ENCODE measurements at regions of chr20 and their contacts with region 1.

Region 1: GRCh38 chr20:33515569-33516216 is 25.8 kb downstream of the CBFA2T2 start:
- DNase-seq: no peak
- H3K4me3 ChIP-seq: no peak overlapping the region
- H3K4me3 Mint-ChIP-seq: no peak overlapping the region
- H3K27ac Mint-ChIP-seq: no peak overlapping the region
- H3K4me1 ChIP-seq: peaks cover 13% of the 10 kb centered on the region
- H3K4me1 Mint-ChIP-seq: peaks cover 17% of the 10 kb centered on the region
- H3K27me3 ChIP-seq: no peaks in the 10 kb centered on the region
- H3K27me3 Mint-ChIP-seq: no peaks in the 10 kb centered on the region
- CTCF ChIP-seq: peak; percentile 50 to 66

Region 2: GRCh38 chr20:33475381-33476150 is 40.1 kb before region 1 on chr20:
- CTCF ChIA-PET with region 1: no interaction called
- POLR2A ChIA-PET with region 1: no interaction called
- intact Hi-C with region 1: loop called (anchors 1 kb)
- DNase-seq: no peak
- H3K4me3 ChIP-seq: no peak overlapping the region
- H3K4me3 Mint-ChIP-seq: no peak overlapping the region
- H3K27ac Mint-ChIP-seq: no peak overlapping the region
- H3K4me1 ChIP-seq: peaks cover 9% of the 10 kb centered on the region
- H3K4me1 Mint-ChIP-seq: peaks cover 12% of the 10 kb centered on the region
- H3K27me3 ChIP-seq: no peaks in the 10 kb centered on the region
- H3K27me3 Mint-ChIP-seq: no peaks in the 10 kb centered on the region
- CTCF ChIP-seq: no peak

Region 3: DNA sequence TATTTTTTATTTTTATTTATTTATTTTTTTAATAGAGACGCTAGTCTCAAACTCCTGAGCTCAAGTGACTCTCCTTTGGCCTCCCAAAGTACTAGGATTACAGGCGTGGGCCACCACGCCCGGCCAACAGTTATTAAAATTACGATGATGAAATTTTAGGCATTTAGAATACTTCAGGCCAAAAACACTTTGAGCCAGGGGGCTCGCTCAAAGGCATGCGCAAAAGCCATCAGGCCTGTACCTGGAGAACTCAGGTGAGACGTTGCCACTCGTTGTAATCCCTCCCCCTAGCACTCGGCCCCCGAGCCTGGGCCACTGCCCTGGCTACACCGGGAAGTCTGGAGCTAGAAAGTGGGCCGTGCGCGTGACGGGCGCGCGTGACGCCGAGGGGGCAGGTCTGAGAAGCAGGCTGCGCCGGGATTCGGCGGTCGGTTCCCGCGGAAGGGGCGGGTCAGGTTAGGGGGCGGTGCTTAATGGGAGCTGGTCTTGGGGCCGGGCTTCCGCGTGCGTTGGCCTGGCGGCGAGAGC is 26.1 kb before region 1 on chr20:
- CTCF ChIA-PET with region 1: interaction called, 4 read pairs
- POLR2A ChIA-PET with region 1: interaction called, 5 read pairs
- intact Hi-C with region 1: loop called (anchors 1 kb)
- DNase-seq: peak; percentile 100
- H3K4me3 ChIP-seq: peak overlapping the region; percentile 16
- H3K4me3 Mint-ChIP-seq: peak overlapping the region; percentile 92
- H3K27ac Mint-ChIP-seq: peak overlapping the region; percentile 38
- H3K4me1 ChIP-seq: peaks cover 14% of the 10 kb centered on the region
- H3K4me1 Mint-ChIP-seq: peaks cover 8% of the 10 kb centered on the region
- H3K27me3 ChIP-seq: no peaks in the 10 kb centered on the region
- H3K27me3 Mint-ChIP-seq: no peaks in the 10 kb centered on the region
- CTCF ChIP-seq: no peak

Region 4: DNA sequence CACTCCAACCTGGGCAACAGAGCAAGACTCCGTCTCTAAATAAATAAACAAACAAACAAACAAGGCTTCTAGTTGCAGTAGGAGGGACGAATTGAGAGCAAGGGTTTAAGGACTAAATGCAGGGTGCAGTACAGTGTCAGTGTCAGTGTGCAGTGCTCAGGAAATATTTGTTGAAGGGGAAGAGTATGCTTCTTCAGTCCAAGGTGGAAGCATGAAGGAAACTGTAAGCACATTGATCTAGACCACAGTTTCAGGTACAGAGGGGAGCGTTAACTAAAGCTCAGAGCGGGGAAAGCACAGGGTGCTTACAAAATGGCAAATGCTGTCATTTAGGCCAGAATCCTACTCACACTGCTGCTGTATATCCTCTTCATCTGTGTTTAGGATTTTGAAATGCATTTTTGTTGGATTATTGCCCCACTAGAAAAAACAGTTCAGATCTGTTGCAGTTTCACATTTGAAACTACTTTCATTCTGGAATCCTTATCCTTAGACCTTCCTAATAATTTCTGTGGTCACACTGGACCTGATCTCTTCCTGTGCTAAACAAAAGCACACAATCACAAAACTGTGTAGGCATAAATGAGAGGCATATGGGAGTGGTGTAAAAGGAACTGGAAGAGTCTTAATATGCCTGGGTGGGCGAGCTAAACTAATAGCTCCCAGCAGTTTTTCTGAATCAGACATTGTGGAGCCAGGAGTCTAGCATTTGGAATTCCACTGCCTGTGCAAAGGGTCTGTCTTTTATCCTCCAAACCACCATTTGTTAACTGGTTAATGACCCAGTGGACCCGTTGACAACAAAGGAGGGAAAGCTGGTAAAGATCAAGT is 15.6 kb after region 1 on chr20:
- CTCF ChIA-PET with region 1: interaction called, 13 read pairs
- POLR2A ChIA-PET with region 1: interaction called, 8 read pairs
- intact Hi-C with region 1: no loop called
- DNase-seq: no peak
- H3K4me3 ChIP-seq: no peak overlapping the region
- H3K4me3 Mint-ChIP-seq: no peak overlapping the region
- H3K27ac Mint-ChIP-seq: no peak overlapping the region
- H3K4me1 ChIP-seq: no peaks in the 10 kb centered on the region
- H3K4me1 Mint-ChIP-seq: peaks cover 25% of the 10 kb centered on the region
- H3K27me3 ChIP-seq: no peaks in the 10 kb centered on the region
- H3K27me3 Mint-ChIP-seq: no peaks in the 10 kb centered on the region
- CTCF ChIP-seq: no peak

Region 5: DNA sequence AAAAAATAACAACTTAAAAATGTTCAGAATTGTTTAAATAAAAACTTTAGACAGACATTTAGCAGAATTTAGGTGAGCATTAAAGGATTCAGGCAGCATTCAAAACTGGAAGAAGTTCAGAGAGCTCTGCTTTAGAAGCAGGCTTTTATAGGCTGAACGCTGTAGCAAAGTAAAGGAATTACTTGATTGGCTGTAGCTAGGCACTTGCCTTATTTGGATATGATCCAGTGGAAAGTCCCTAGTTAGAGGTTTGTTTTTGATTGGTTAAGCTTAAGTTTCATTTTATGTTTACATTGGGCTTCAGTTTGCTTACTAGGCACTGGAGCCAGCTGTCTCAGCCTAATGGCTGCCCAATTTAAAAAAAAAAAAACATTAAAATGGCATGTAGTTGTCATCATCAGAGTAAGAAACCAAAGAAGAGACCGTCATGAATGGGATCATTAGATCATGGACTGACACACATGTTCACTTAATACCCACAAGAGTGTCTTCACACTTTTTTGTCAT is 39.3 kb after region 1 on chr20:
- CTCF ChIA-PET with region 1: no interaction called
- POLR2A ChIA-PET with region 1: no interaction called
- intact Hi-C with region 1: no loop called
- DNase-seq: peak in 1 of 2 experiments; percentile 74
- H3K4me3 ChIP-seq: no peak overlapping the region
- H3K4me3 Mint-ChIP-seq: no peak overlapping the region
- H3K27ac Mint-ChIP-seq: peak overlapping the region; percentile 56
- H3K4me1 ChIP-seq: peaks cover 10% of the 10 kb centered on the region
- H3K4me1 Mint-ChIP-seq: peaks cover 17% of the 10 kb centered on the region
- H3K27me3 ChIP-seq: no peaks in the 10 kb centered on the region
- H3K27me3 Mint-ChIP-seq: no peaks in the 10 kb centered on the region
- CTCF ChIP-seq: no peak

Measured in Caco-2 (cell line).